HCT116 (cell line): ENCODE measurements at regions of chr7 and their contacts with region 1.

Region 1: DNA sequence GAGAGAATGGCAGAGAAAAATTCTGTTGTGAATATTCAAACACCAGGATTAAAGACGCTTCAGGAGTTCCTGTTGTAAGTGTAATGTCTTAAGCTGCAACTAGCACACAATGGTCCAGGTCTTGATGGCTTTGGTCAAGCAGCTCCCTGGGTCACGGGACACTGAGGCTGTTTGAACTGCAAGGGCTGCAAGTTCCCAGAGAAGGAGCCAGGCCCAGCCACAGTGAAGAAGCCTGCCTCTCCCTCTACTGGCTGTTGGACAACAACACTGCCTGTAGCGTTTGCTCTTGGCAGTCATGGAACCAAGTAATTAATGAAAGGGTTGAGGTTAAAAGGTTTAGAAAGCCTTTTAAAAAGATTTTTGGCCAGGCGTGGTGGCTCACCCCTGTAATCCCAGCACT is 31.9 kb upstream of the GUSB start:
- DNase-seq: peak; percentile 26
- ATAC-seq: peak; percentile 81
- H3K4me3 ChIP-seq: no peak overlapping the region
- H3K27ac ChIP-seq: no peak overlapping the region
- H3K4me1 ChIP-seq: peaks cover 4 to 12% of the 10 kb centered on the region in 2 experiments; a peak in 2 of 4 replicates
- H3K27me3 ChIP-seq: no peaks in the 10 kb centered on the region
- CTCF ChIP-seq: peak; percentile 28 to 41 (median 32); a peak in 4 of 6 replicates
- POLR2A ChIP-seq: no peak
- RAD21 ChIP-seq: peak; percentile 55; the same call in 1 of the 2 replicates

Region 2: GRCh38 chr7:65722345-65722792 is 291.5 kb before region 1 on chr7:
- CTCF ChIA-PET with region 1: no interaction called
- POLR2A ChIA-PET with region 1: no interaction called
- RAD21 ChIA-PET with region 1: no interaction called
- intact Hi-C with region 1: loop called (anchors 5 kb)
- DNase-seq: peak; percentile 37
- ATAC-seq: peak; percentile 89
- H3K4me3 ChIP-seq: no peak overlapping the region
- H3K27ac ChIP-seq: no peak overlapping the region
- H3K4me1 ChIP-seq: no peaks in the 10 kb centered on the region
- H3K27me3 ChIP-seq: no peaks in the 10 kb centered on the region
- CTCF ChIP-seq: peak; percentile 77 to 97 (median 84)
- POLR2A ChIP-seq: no peak
- RAD21 ChIP-seq: peak; percentile 87

Region 3: DNA sequence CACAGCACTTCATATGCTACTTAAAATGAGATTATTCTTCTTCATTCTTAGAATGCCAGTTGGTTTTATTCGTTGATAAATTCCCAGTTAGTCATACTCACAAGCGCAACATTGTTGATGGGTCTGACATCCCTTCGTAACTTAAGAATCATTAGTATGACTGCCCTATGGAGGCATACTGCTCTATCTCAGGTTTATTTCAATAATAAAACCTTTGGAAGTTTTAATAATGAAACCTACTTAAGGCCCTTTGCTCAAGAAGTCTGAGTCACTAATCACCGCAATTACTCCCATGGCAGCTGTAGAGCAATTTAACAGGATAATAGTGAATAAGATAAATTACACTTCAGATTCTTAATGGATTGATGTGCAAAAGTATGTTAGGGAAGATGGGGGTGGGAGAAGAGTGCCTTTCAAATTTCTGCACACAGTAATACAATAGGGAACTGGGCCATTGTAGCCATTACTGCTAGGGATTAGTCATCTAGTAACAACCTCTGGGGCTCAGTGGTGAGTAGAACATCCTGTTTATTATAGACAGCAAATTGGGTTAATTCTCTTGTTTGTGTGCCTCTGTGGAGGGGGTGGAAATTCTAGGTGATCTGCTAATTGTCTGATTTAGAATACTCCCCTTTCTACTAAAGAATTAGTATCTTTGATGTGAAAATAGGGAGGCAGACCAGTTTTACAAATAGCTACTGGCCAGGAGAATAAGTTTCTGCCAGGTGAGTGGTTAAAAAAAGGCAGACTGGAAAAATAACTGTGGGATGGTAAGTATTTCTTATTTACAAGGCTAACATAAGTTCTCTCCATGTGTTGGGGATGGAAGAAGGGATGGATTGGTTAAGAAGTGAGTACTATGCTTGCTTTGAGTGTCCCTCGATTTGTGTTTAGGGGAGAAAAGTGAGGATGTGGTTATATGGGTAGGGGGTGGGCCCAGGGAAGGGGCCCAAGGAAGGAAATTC is 215.5 kb before region 1 on chr7:
- CTCF ChIA-PET with region 1: no interaction called
- POLR2A ChIA-PET with region 1: no interaction called
- RAD21 ChIA-PET with region 1: no interaction called
- intact Hi-C with region 1: no loop called
- DNase-seq: no peak
- ATAC-seq: no peak
- H3K4me3 ChIP-seq: no peak overlapping the region
- H3K27ac ChIP-seq: no peak overlapping the region
- H3K4me1 ChIP-seq: peaks cover 0 to 6% of the 10 kb centered on the region in 2 experiments; a peak in 1 of 4 replicates
- H3K27me3 ChIP-seq: no peaks in the 10 kb centered on the region
- CTCF ChIP-seq: no peak
- POLR2A ChIP-seq: no peak
- RAD21 ChIP-seq: no peak

Region 4: GRCh38 chr7:65896279-65896870 is 117.5 kb before region 1 on chr7:
- CTCF ChIA-PET with region 1: no interaction called
- POLR2A ChIA-PET with region 1: no interaction called
- RAD21 ChIA-PET with region 1: no interaction called
- intact Hi-C with region 1: no loop called
- DNase-seq: no peak
- ATAC-seq: no peak
- H3K4me3 ChIP-seq: no peak overlapping the region
- H3K27ac ChIP-seq: no peak overlapping the region
- H3K4me1 ChIP-seq: peaks cover 0 to 4% of the 10 kb centered on the region in 2 experiments; a peak in 2 of 4 replicates
- H3K27me3 ChIP-seq: no peaks in the 10 kb centered on the region
- CTCF ChIP-seq: no peak
- POLR2A ChIP-seq: no peak
- RAD21 ChIP-seq: no peak

Region 5: GRCh38 chr7:65989694-65990080 is 24.2 kb before region 1 on chr7:
- CTCF ChIA-PET with region 1: no interaction called
- POLR2A ChIA-PET with region 1: no interaction called
- RAD21 ChIA-PET with region 1: no interaction called
- intact Hi-C with region 1: no loop called
- DNase-seq: no peak
- ATAC-seq: no peak
- H3K4me3 ChIP-seq: no peak overlapping the region
- H3K27ac ChIP-seq: no peak overlapping the region
- H3K4me1 ChIP-seq: no peaks in the 10 kb centered on the region
- H3K27me3 ChIP-seq: no peaks in the 10 kb centered on the region
- CTCF ChIP-seq: no peak
- POLR2A ChIP-seq: no peak
- RAD21 ChIP-seq: no peak

Region 6: DNA sequence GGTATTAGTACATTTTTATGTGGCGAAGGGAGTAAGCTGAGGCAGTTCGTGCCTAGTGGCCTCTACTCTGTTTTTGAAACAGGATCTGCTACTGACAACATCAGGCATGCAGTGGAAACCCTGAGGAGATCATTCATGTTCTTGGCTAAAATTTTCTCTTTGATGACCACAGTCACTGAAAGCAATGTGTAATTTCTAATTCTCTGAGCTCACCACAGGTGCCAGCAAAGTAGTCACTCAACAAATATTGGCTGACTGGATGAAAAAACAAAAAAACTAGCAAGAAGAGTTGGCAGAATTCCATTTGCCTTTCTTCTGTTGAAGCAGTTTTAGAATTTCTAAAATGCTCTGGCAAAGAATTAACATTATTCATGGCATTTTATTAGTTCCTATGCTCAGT is 438.2 kb after region 1 on chr7:
- CTCF ChIA-PET with region 1: no interaction called
- POLR2A ChIA-PET with region 1: no interaction called
- RAD21 ChIA-PET with region 1: no interaction called
- intact Hi-C with region 1: no loop called
- DNase-seq: no peak
- ATAC-seq: no peak
- H3K4me3 ChIP-seq: no peak overlapping the region
- H3K27ac ChIP-seq: no peak overlapping the region
- H3K4me1 ChIP-seq: no peaks in the 10 kb centered on the region
- H3K27me3 ChIP-seq: no peaks in the 10 kb centered on the region
- CTCF ChIP-seq: no peak
- POLR2A ChIP-seq: no peak
- RAD21 ChIP-seq: no peak